HepG2 (cell line): ENCODE measurements at regions of chr6 and their contacts with region 1.

Region 1: DNA sequence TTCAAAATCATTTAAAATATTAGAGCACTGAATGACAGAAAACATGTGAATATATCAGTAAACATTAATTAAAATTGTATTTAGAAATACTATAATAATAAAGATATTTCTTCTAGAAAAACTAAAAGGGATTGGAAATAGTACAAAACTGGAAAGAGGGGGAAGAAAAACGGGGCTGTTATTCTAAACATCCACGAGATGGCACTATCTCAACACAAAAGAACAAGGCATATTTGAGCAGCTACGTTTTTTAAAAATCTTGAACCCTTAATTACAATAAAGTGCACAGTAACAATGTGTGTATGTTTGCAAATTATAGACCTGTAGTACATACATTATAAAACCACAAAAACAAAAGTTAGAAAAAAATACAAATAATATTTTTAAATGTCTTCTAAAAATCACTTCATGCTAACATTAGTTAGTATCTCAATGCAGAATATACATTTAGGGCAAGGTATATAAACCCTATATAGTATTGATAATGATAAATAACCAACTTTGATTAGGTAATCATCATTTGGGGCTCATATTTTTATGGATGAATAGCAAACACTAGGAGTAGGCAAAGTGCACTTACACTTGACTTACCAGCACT is 42.5 kb upstream of the PNISR start:
- DNase-seq: peak; percentile 18
- ATAC-seq: no peak
- H3K4me3 ChIP-seq: no peak overlapping the region
- H3K27ac ChIP-seq: no peak overlapping the region
- H3K4me1 ChIP-seq: no peaks in the 10 kb centered on the region
- H3K27me3 ChIP-seq: no peaks in the 10 kb centered on the region
- CTCF ChIP-seq: peak; percentile 58
- EP300 ChIP-seq: no peak
- POLR2A ChIP-seq: no peak
- RAD21 ChIP-seq: no peak

Region 2: DNA sequence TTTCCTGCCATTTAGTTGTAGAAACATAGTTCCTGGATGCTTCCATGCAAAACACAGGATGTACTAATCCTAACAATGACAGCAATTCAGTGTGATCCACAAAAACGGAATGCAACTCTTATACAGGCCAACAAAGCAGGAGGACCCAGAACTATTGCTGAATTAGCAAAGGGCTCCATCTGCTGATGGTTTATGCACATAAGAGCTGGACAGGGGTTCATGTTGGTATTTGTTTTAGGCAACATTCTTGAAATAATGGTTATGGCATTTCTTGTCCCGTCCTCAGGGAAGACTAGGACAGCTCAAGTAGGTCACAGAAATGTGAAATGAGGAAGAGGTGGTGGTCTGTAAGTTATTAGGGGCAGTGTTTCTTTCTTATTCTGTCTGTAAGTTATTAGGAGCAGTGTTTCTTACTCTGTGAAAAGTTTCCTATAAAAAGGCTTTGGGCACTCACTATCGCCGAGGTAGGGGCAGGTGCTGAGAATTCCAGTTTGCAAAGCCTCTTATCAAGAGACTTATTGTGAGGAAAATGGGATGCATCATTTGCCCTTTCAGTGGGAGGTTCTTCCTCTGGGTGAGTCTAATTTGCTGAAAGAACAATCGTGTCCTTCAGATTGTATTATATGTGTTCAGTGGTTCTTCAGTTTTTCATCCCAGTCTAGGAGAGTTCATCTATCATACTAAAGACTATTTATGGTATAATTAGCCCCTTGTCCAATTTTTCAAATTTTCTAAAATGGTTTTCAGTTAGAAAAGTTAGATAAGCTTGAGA is 355.3 kb after region 1 on chr6:
- CTCF ChIA-PET with region 1: interaction called, 5 read pairs
- POLR2A ChIA-PET with region 1: no interaction called
- in situ Hi-C with region 1: no loop called
- intact Hi-C with region 1: loop called (anchors 5 kb)
- DNase-seq: peak; percentile 64
- ATAC-seq: peak; percentile 99
- H3K4me3 ChIP-seq: peak overlapping the region in 1 of 3 experiments; percentile 23; a peak in 2 of 6 replicates
- H3K27ac ChIP-seq: no peak overlapping the region
- H3K4me1 ChIP-seq: peaks cover 7% of the 10 kb centered on the region
- H3K27me3 ChIP-seq: no peaks in the 10 kb centered on the region; a peak in 1 of 5 replicates
- CTCF ChIP-seq: peak; percentile 76
- EP300 ChIP-seq: no peak
- POLR2A ChIP-seq: no peak
- RAD21 ChIP-seq: peak; percentile 57